A673 (cell line): ENCODE measurements at regions of chr4 and their contacts with region 1.

Region 1: DNA sequence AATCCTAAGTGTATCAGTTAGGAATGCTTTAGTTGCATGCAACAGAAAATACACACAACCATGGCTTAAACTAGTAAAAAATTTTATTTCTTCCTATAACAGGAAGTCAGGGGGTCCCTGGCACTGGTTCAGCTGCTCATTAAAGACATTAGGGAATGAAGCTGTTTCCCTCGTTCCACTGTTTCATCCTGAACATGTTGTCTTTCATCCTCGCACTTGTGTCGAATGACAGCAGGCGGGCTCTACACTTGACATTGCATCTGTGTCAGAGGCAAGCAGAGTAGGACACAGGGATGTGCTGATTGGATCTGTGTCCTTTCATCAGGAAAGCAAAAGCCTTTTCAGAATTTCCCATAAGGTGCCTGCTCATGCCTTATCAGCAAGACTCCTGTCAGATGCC is 22.8 kb upstream of the C1QTNF7 start:
- DNase-seq: peak; percentile 70
- H3K4me3 ChIP-seq: no peak overlapping the region
- H3K27ac ChIP-seq: peak overlapping the region; percentile 58
- H3K4me1 ChIP-seq: peaks cover 87% of the 10 kb centered on the region
- H3K27me3 ChIP-seq: no peaks in the 10 kb centered on the region
- CTCF ChIP-seq: no peak

Region 2: GRCh38 chr4:15295421-15296162 is 109.4 kb before region 1 on chr4:
- CTCF ChIA-PET with region 1: no interaction called
- POLR2A ChIA-PET with region 1: no interaction called
- intact Hi-C with region 1: loop called (anchors 5 kb)
- DNase-seq: peak; percentile 87
- H3K4me3 ChIP-seq: no peak overlapping the region
- H3K27ac ChIP-seq: no peak overlapping the region
- H3K4me1 ChIP-seq: peaks cover 78% of the 10 kb centered on the region
- H3K27me3 ChIP-seq: peaks cover 15% of the 10 kb centered on the region
- CTCF ChIP-seq: no peak

Region 3: GRCh38 chr4:15420642-15421041 is 15.6 kb after region 1 on chr4:
- CTCF ChIA-PET with region 1: no interaction called
- POLR2A ChIA-PET with region 1: no interaction called
- intact Hi-C with region 1: no loop called
- DNase-seq: no peak
- H3K4me3 ChIP-seq: no peak overlapping the region
- H3K27ac ChIP-seq: no peak overlapping the region
- H3K4me1 ChIP-seq: no peaks in the 10 kb centered on the region
- H3K27me3 ChIP-seq: no peaks in the 10 kb centered on the region
- CTCF ChIP-seq: no peak